ENCODE measurements at regions of chr1 and their contacts with region 1.

Region 1: GRCh38 chr1:10378081-10378841 is 20.6 kb upstream of the PGD start:
- DNase-seq: peak in 1 of 2 donors; percentile 24
- ATAC-seq: peak in 6 of 8 donors; percentile 34 to 66 (median 62)
- H3K4me3 ChIP-seq: no peak overlapping the region
- H3K27ac ChIP-seq: peak overlapping the region in 7 of 10 donors; percentile 6 to 81 (median 56)
- H3K4me1 ChIP-seq: peaks cover 0 to 28% (median 9%) of the 10 kb centered on the region in 9 donors
- H3K27me3 ChIP-seq: no peaks in the 10 kb centered on the region
- CTCF ChIP-seq: no peak

Region 2: DNA sequence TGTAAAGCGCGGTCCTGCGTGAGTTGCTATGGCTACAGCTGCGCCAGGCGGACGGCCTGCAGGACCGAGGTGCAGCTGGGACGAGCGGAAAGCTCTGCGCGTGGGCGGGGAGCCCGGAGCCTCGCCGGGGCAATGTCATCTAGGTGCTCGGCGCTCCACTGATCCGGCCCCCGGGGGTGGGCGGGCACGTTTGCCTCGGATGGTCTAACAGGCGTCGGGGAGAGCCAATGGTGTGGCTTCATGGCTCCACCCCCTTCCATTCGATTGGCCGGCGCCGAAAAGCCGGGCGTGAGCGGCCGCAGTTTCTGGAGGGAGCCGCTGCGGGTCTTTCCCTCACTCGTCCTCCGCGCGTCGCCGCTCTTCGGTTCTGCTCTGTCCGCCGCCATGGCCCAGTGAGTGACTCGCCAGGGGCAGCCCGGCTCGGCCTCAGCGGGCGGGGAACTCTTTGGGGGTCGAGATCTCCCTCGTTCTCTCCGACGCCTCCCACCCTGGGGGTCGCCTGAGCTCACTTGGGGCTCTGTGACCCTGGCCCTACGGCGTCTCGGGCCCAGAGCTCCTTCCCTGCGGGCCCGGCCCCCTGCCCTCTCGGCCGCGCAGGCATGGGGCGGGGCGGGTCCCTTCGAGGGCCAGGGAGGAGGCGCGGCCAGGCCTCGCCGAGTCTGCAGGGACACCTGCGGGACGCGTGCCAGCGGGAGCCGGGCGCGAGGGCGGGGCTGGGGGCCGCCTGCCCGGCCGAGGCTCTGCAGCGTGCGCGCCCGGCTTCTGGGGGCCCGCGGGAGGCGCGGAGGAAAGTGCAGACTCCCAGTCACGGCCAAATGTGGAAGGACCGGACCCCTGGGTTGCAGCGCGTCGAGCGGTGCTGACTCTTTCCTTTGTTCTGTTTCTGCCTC is 20.7 kb after region 1 on chr1 and contains the start of gene PGD:
- intact Hi-C with region 1: loop called in 1 of 10 experiments (anchors 2 kb)
- DNase-seq: peak; percentile 98 to 99
- ATAC-seq: peak; percentile 98 to 100 (median 100)
- H3K4me3 ChIP-seq: peak within 1 kb of the TSS; percentile 57 to 99 (median 80)
- H3K27ac ChIP-seq: peak within 1 kb of the TSS; percentile 59 to 97 (median 90)
- H3K4me1 ChIP-seq: peaks cover 3 to 47% (median 14%) of the 10 kb centered on the region in 9 donors
- H3K27me3 ChIP-seq: no peaks in the 10 kb centered on the region
- CTCF ChIP-seq: peak in 1 of 9 donors; percentile 10
- total RNA-seq, gene PGD: 28.3 to 60.9 (median 32.9) TPM

Region 3: DNA sequence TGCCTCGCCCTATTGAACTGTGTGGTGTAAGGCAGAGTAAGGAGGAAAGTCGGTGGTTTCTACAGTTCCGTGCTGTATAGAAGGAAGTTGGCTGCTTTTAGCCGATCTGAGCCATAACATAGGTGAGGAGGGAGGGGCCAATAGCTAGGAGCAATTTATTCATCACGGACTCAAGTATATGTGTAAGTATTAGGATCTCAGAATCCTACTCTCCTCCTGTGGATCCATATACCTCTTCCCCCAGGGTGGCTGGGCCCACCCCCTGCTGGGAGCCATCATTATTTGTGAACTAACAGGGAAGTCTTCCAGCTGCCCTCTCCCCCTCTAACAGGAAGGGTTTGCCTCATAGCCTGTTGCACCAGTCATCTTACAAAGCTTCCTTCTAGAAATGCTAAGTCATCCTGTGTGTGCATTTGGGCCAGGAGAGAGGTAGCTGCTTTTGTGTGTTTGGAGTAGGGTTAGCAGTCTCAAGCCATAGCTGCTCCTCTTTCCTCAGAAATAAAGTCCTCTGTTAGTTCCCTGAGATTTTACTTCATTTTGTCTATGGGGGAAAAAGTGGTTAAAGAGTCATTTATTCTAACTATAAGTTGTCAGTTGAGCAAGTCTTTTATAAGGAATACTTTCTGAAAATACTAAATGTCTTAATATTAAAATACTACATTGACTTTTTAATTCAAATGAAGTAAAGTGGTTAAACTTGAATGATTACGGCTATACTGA is 37.1 kb after region 1 on chr1:
- intact Hi-C with region 1: loop called in 1 of 10 experiments (anchors 5 kb)
- DNase-seq: no peak
- ATAC-seq: peak; percentile 38 to 87 (median 62)
- H3K4me3 ChIP-seq: peak overlapping the region in 1 of 10 donors; percentile 16
- H3K27ac ChIP-seq: peak overlapping the region in 4 of 10 donors; percentile 6 to 85 (median 20)
- H3K4me1 ChIP-seq: peaks cover 0 to 30% (median 0%) of the 10 kb centered on the region in 9 donors
- H3K27me3 ChIP-seq: no peaks in the 10 kb centered on the region
- CTCF ChIP-seq: no peak

Region 4: GRCh38 chr1:10430216-10431069 is 52.2 kb after region 1 on chr1 and contains the start of gene CENPS:
- intact Hi-C with region 1: loop called (anchors 1 to 5 kb)
- DNase-seq: peak; percentile 90 to 92
- ATAC-seq: peak; percentile 96 to 98 (median 98)
- H3K4me3 ChIP-seq: peak within 1 kb of the TSS; percentile 52 to 93 (median 75)
- H3K27ac ChIP-seq: peak within 1 kb of the TSS in 9 of 10 donors; percentile 43 to 81 (median 67)
- H3K4me1 ChIP-seq: peaks cover 0 to 19% (median 13%) of the 10 kb centered on the region in 9 donors
- H3K27me3 ChIP-seq: no peaks in the 10 kb centered on the region
- CTCF ChIP-seq: peak; percentile 92 to 98 (median 96)
- total RNA-seq, gene CENPS: 4.9 to 10.7 (median 9.4) TPM

Region 5: DNA sequence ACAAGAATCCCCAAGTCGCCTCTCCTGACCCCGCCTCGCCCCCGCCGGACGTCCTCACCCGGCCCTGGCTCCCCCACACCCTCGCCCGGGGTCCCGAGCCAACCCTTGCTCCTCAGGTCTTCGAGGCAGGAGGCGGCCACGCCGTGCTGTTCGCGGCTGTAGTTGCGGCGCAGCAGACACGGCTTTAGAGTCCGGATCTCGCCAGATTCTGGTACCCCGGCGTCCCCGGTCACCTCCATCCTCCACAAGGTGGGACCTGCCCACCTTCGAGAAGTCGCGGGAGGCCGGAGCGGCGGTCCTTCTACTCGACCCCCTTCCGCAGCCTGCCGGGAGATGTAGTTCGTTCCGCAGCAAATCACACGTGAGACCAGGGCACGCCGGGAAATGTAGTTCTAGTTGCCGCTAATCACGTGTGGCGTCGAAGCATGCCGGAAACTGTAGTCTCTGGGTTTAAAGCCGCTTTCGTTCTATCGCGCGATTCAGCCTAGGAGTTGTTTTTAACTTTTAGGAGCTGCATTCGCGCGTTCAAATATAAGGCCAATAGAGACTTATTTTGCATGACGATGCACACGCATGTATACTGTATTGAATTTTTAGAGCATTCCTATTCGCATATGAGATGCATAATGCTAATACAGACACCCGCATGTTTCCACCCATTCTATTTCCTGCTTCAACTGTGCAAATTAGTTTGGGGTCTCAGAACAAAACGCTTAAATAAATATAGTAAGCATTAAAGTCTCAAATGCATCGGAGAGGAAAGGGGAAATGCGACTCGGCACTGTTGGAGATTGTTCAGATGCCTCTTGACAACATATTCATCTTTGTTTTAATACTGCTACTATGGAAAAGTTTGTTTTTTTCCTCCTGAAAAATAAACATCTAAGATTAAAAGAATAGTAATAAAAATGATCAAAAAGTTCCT is 94.2 kb after region 1 on chr1 and contains the start of gene DFFA:
- intact Hi-C with region 1: loop called in 1 of 10 experiments (anchors 10 kb)
- DNase-seq: peak; percentile 88 to 96
- ATAC-seq: peak; percentile 83 to 94 (median 91)
- H3K4me3 ChIP-seq: peak within 1 kb of the TSS; percentile 45 to 94 (median 74)
- H3K27ac ChIP-seq: peak within 1 kb of the TSS in 8 of 10 donors; percentile 59 to 85 (median 71)
- H3K4me1 ChIP-seq: peaks cover 4 to 46% (median 31%) of the 10 kb centered on the region in 9 donors
- H3K27me3 ChIP-seq: no peaks in the 10 kb centered on the region
- CTCF ChIP-seq: no peak
- total RNA-seq, gene DFFA: 19.8 to 26.7 (median 23.2) TPM

Region 6: GRCh38 chr1:10494754-10495474 is 116.7 kb after region 1 on chr1:
- intact Hi-C with region 1: loop called in 1 of 10 experiments (anchors 5 kb)
- DNase-seq: peak; percentile 65 to 68
- ATAC-seq: peak; percentile 69 to 92 (median 86)
- H3K4me3 ChIP-seq: peak overlapping the region in 6 of 10 donors; percentile 23 to 47 (median 35)
- H3K27ac ChIP-seq: peak overlapping the region in 6 of 10 donors; percentile 11 to 82 (median 51)
- H3K4me1 ChIP-seq: peaks cover 0 to 36% (median 23%) of the 10 kb centered on the region in 9 donors
- H3K27me3 ChIP-seq: no peaks in the 10 kb centered on the region
- CTCF ChIP-seq: peak; percentile 80 to 92 (median 88)